ENCODE measurements at regions of chr15 and their contacts with region 1.

Region 1: GRCh38 chr15:70936326-70936725 is 43.7 kb downstream of the LRRC49 start:
- DNase-seq: no peak
- ATAC-seq: no peak
- H3K4me3 ChIP-seq: no peak overlapping the region
- H3K27ac ChIP-seq: no peak overlapping the region
- H3K4me1 ChIP-seq: no peaks in the 10 kb centered on the region
- H3K27me3 ChIP-seq: no peaks in the 10 kb centered on the region
- CTCF ChIP-seq: no peak

Region 2: GRCh38 chr15:70748281-70748747 is 188.0 kb before region 1 on chr15:
- CTCF ChIA-PET with region 1: no interaction called
- POLR2A ChIA-PET with region 1: no interaction called
- intact Hi-C with region 1: no loop called
- DNase-seq: peak; percentile 10
- ATAC-seq: no peak
- H3K4me3 ChIP-seq: no peak overlapping the region
- H3K27ac ChIP-seq: no peak overlapping the region
- H3K4me1 ChIP-seq: peaks cover 3% of the 10 kb centered on the region
- H3K27me3 ChIP-seq: no peaks in the 10 kb centered on the region
- CTCF ChIP-seq: no peak

Region 3: GRCh38 chr15:70995383-70995970 is 59.2 kb after region 1 on chr15:
- CTCF ChIA-PET with region 1: no interaction called
- POLR2A ChIA-PET with region 1: no interaction called
- intact Hi-C with region 1: loop called (anchors 10 kb)
- DNase-seq: no peak
- ATAC-seq: no peak
- H3K4me3 ChIP-seq: no peak overlapping the region
- H3K27ac ChIP-seq: no peak overlapping the region
- H3K4me1 ChIP-seq: no peaks in the 10 kb centered on the region
- H3K27me3 ChIP-seq: no peaks in the 10 kb centered on the region
- CTCF ChIP-seq: no peak